Common myeloid progenitor, CD34-positive (primary cell): ENCODE measurements at regions of chr15 and their contacts with region 1.

Region 1: GRCh38 chr15:84658080-84658787 is at the start of gene NMB:
- DNase-seq: peak; percentile 95 to 98 (median 97)
- H3K4me3 ChIP-seq: peak within 1 kb of the TSS; percentile 30 to 82 (median 65)
- H3K27ac ChIP-seq: peak within 1 kb of the TSS in 1 of 2 experiments; percentile 77
- H3K4me1 ChIP-seq: peaks cover 8 to 37% (median 25%) of the 10 kb centered on the region in 4 experiments
- H3K27me3 ChIP-seq: no peaks in the 10 kb centered on the region

Region 2: DNA sequence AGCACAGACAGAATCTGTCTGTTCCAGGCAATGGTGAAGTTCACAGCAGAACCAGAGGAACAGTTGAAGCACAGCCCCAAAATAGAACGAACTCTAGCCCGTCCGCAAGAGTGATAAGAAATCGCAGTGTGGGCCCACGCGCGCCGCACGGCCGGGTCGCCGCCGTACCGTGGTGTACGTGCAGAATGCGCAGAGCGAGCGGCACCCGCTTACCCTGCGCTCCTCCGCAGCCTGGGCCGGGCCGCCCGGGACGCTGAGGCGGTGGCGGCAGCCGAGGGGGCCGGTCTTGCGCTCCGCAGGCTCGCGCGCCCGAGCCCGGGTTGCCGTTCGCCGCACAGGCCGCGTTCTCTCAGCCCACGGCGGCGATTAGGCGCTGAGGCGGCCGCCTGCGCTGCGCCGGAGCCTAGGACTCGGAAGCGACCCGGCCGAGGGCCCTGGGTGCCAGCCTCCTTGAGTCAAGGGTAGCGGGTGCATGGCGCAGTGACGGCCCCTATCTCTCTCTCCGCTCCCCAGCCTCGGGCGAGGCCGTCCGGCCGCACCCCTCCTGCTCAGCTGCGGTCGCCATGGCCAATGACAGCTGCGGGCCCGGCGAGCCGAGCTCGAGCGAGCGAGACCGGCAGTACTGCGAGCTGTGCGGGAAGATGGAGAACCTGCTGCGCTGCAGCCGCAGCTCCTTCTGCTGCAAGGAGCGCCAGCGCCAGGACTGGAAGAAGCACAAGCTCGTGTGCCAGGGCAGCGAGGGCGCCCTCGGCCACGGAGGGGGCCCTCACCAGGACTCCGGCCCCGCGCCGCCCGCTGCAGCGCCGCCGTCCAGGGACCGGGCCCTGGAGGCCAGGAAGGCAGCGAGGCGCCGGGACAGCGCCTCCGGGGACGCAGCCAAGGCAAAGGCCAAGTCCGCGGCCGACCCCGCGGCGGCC is 24.7 kb before region 1 on chr15:
- CTCF ChIA-PET with region 1: interaction called, 16 read pairs
- POLR2A ChIA-PET with region 1: no interaction called
- DNase-seq: peak; percentile 67 to 87 (median 78)
- H3K4me3 ChIP-seq: peak overlapping the region; percentile 28 to 83 (median 68)
- H3K27ac ChIP-seq: peak overlapping the region; percentile 15 to 54
- H3K4me1 ChIP-seq: peaks cover 12 to 49% (median 36%) of the 10 kb centered on the region in 4 experiments
- H3K27me3 ChIP-seq: no peaks in the 10 kb centered on the region

Region 3: DNA sequence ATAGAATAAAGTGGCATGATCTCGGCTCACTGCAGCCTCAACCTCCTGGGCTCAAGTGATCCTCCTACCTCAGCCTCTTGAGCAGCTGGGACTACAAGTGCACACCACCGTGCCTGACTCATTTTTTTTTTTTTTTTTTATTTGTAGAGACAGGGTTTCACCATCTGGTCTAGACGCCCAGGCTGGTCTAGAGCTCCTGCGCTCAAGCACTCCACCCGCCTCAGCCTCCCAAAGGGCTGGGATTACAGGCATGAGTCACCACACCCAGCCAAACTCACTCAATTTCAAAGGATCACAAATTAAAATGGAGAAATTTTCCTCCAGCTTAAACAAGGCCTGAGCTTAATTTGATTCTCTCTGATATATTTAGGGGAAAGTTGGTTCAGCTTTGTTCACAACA is 27.1 kb after region 1 on chr15:
- CTCF ChIA-PET with region 1: no interaction called
- POLR2A ChIA-PET with region 1: no interaction called
- DNase-seq: no peak
- H3K4me3 ChIP-seq: no peak overlapping the region
- H3K27ac ChIP-seq: no peak overlapping the region
- H3K4me1 ChIP-seq: no peaks in the 10 kb centered on the region
- H3K27me3 ChIP-seq: no peaks in the 10 kb centered on the region

Region 4: DNA sequence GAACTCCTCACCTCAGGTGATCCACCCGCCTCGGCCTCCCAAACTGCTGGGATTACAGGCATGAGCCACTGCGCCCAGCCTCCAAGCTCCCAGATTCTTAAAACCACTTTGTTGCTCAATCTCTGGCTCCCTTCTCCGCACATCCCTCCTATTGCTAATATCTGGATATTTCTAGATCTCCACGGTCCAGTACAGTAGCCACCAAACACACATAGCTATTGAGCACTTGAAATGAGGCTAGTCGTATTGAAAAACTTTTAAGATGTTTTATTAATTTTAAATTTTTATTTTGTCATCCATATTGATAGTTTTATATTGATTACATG is 270.6 kb after region 1 on chr15:
- CTCF ChIA-PET with region 1: interaction called, 10 read pairs
- POLR2A ChIA-PET with region 1: no interaction called
- DNase-seq: no peak
- H3K4me3 ChIP-seq: no peak overlapping the region
- H3K27ac ChIP-seq: no peak overlapping the region
- H3K4me1 ChIP-seq: peaks cover 0 to 8% (median 6%) of the 10 kb centered on the region in 4 experiments
- H3K27me3 ChIP-seq: no peaks in the 10 kb centered on the region